B cell (primary cell): ENCODE measurements at regions of chr2 and their contacts with region 1.

Region 1: DNA sequence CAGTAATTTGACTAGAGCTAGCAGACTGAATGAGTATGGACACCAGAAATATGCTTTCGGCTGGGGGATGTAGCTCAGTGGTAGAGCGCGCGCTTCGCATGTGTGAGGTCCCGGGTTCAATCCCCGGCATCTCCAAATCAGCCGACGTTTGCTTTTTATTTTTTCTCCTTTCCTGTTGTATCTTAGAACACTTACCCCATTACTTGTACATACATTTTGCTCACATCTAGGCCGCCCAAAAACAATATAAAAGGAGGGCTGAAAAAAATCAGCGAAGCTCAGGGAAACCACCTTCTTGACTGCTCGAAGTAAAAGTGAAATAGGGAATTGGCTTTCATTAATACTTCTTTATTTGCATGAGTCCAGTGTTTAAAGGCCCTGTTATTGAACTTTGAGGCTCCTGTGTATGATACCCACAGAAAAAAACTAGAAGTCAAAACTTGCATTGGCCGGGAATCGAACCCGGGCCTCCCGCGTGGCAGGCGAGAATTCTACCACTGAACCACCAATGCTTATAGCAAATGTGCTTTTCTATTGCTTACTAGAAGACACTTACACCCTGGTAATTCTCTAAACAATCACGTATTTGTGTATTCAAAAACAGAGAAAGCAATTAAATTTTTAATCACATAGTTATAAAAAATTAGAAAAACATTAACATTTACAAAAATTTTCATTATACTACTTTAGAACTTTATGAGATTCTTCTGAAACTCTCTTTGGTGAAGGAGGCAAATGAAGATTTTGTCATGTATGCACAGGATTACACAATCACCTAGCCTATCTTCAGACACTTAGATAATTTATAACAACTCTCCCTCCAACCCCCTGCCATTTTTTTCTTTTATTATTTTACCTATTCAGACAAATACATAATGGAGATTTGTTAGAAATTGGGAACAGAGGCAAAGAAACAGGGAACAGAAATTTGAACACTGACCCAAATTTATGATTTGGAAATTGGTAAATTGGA is 35.2 kb upstream of the GPD2 start:
- DNase-seq: peak; percentile 92
- ATAC-seq: peak; percentile 77
- H3K4me3 ChIP-seq: peak overlapping the region; percentile 61 to 100 (median 76)
- H3K4me3 Mint-ChIP-seq: peak overlapping the region; percentile 95
- H3K27ac ChIP-seq: peak overlapping the region; percentile 91 to 98
- H3K27ac Mint-ChIP-seq: peak overlapping the region; percentile 98
- H3K4me1 ChIP-seq: peaks cover 10 to 24% of the 10 kb centered on the region in 2 donors
- H3K4me1 Mint-ChIP-seq: peaks cover 28% of the 10 kb centered on the region
- H3K27me3 ChIP-seq: no peaks in the 10 kb centered on the region
- H3K27me3 Mint-ChIP-seq: peaks cover 6% of the 10 kb centered on the region
- CTCF ChIP-seq: no peak

Region 2: DNA sequence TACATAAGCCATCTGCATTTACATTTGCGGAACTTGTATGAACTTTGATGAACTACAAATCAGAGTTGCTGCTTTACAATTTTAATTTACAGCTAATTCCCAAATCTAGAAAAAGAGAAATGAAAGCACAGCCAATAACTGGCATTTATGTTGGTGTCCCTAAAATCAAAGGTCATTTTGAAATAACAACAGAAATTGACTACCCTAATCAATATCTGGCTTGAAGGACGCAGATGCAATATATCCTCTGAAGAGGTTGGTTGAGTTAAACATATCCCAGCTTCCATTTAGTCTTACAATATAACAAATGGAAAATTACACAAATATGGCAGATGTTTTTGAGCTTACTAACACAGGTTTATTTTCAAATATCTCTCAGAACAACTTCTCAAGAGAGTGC is 1525.0 kb before region 1 on chr2:
- CTCF ChIA-PET with region 1: no interaction called
- POLR2A ChIA-PET with region 1: no interaction called
- intact Hi-C with region 1: no loop called
- DNase-seq: no peak
- ATAC-seq: no peak
- H3K4me3 ChIP-seq: no peak overlapping the region
- H3K4me3 Mint-ChIP-seq: no peak overlapping the region
- H3K27ac ChIP-seq: no peak overlapping the region
- H3K27ac Mint-ChIP-seq: no peak overlapping the region
- H3K4me1 ChIP-seq: no peaks in the 10 kb centered on the region
- H3K4me1 Mint-ChIP-seq: no peaks in the 10 kb centered on the region
- H3K27me3 ChIP-seq: no peaks in the 10 kb centered on the region
- H3K27me3 Mint-ChIP-seq: no peaks in the 10 kb centered on the region
- CTCF ChIP-seq: no peak

Region 3: GRCh38 chr2:156341452-156342253 is 59.3 kb before region 1 on chr2:
- CTCF ChIA-PET with region 1: interaction called, 25 read pairs
- POLR2A ChIA-PET with region 1: interaction called, 19 read pairs
- intact Hi-C with region 1: loop called (anchors 1 kb)
- DNase-seq: peak; percentile 94
- ATAC-seq: peak; percentile 73
- H3K4me3 ChIP-seq: peak overlapping the region; percentile 81 to 96 (median 84)
- H3K4me3 Mint-ChIP-seq: peak overlapping the region; percentile 93
- H3K27ac ChIP-seq: peak overlapping the region; percentile 99 to 100
- H3K27ac Mint-ChIP-seq: peak overlapping the region; percentile 99
- H3K4me1 ChIP-seq: peaks cover 13 to 14% of the 10 kb centered on the region in 2 donors
- H3K4me1 Mint-ChIP-seq: peaks cover 25% of the 10 kb centered on the region
- H3K27me3 ChIP-seq: no peaks in the 10 kb centered on the region
- H3K27me3 Mint-ChIP-seq: no peaks in the 10 kb centered on the region
- CTCF ChIP-seq: no peak

Region 4: DNA sequence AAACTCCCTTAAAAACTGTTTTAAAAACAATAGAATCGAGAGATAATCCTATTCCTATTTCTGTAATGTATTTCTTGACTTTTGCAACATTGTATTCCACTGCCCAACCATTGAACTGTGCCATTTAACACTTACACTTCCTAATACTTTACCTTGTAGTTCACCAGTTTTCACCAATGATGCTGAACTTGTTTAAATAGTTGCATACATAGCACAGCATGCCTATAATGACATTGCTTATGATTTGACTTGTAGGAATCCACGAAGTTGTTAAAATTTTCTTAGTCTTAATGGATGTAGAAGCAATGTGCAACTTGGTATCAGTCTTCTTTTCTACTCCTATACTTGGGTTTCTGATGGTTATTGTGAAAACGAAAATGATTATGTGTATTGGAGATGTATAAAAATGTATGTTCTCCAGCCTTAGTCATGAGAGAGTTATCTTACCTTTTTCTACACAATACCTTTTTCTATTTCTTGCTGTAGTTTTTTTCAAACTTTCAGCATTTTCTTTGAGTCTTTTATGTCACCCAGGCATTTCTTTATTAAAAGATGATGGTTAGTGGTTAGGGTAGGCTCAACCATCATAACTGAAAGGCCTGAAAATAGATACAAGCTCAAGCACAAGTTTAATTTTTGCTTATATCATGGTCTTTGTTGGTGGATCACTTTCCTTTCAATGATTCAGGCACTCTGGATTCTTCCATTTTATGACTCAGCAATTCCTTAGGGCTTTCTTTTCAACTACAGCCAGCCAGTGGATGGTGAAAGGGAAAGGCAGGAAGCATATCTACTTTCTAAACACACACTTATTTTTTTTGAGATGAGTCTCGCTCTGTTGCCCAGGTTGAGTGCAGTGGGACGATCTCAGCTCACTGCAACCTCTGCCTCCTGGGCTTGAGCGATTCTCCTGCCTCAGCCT is 44.6 kb after region 1 on chr2:
- CTCF ChIA-PET with region 1: no interaction called
- POLR2A ChIA-PET with region 1: no interaction called
- intact Hi-C with region 1: no loop called
- DNase-seq: no peak
- ATAC-seq: no peak
- H3K4me3 ChIP-seq: no peak overlapping the region
- H3K4me3 Mint-ChIP-seq: no peak overlapping the region
- H3K27ac ChIP-seq: no peak overlapping the region
- H3K27ac Mint-ChIP-seq: no peak overlapping the region
- H3K4me1 ChIP-seq: no peaks in the 10 kb centered on the region
- H3K4me1 Mint-ChIP-seq: peaks cover 8% of the 10 kb centered on the region
- H3K27me3 ChIP-seq: no peaks in the 10 kb centered on the region
- H3K27me3 Mint-ChIP-seq: no peaks in the 10 kb centered on the region
- CTCF ChIP-seq: no peak